ENCODE measurements at regions of chr1 and their contacts with region 1.

Region 1: DNA sequence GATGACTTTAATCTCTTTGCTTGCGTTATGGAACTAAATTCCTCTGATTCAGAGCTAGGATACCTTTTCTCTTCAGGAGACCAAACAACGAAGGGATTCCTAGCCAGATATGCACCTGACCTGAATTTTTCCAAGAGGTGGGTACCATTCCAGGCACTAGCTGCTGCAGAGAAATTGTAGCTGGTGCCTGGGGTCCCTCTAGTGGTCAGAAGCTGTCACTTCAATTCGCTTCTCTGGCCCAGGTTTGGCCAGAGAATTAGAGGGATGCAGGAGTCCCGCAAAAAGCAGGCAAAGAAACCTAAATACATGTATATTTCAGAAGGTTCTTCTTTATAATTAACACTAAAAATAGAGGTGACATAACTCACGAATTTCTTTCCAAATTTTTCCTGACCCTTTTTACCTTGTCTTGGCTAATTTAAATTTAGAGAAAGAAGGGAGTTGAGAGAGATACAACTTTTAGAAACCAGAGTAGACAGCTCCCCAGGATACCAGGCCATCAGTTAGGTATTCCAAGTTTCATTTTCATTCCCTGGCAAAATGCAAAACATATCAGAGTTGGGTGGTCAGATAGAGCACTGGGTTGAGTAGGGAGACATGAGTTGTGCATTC is 9.6 kb downstream of the ACKR1 start:
- DNase-seq: peak; percentile 67

Region 2: GRCh38 chr1:159132271-159132881 is 81.9 kb before region 1 on chr1:
- CTCF ChIA-PET with region 1: interaction called, 37 read pairs
- POLR2A ChIA-PET with region 1: no interaction called
- DNase-seq: peak; percentile 70

Measured in HEK293T (cell line).